Naive thymus-derived CD8-positive, alpha-beta T cell (primary cell): ENCODE measurements at regions of chr13 and their contacts with region 1.

Region 1: DNA sequence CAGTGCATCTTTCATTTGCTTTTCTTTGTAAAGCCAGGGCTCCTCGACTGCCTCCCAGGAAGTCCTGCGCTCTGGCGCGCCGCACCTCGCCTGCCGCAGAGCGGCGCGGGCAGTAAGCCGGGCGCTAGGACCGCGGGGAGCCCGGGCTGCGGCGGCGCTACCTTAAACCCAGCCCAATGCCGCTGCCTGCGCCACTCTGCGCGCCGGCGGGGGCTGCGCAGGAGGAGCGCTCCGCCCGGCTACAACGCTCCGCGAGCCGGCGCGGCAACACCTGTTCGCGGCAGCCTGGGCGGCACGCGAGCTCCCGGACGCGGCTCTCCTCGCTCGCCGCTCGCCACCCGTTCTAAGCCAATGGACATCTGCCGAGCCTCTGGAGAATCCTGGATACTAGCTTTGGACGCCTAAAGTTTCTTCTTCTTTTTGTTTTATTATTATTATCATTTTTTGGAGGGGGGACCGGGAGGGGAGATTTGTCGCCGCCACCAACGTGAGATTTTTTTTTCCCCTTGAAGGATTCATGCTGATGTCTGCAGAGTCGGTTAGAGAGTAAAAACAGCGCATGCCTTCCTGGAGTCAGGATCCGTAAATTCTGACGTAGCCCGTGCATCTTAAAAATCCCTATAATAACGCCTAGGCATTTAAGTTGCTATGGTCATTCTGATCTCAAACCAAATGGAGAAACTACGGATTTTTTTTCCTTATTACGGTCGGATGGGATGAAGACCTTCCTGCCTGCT is at the start of gene FGF9:
- DNase-seq: peak; percentile 71 to 89 (median 82)
- ATAC-seq: peak; percentile 66 to 70
- H3K4me3 Mint-ChIP-seq: peak within 1 kb of the TSS; percentile 89 to 97 (median 94)
- H3K27ac Mint-ChIP-seq: peak within 1 kb of the TSS; percentile 72 to 94 (median 88)
- H3K4me1 Mint-ChIP-seq: peaks cover 20 to 53% (median 47%) of the 10 kb centered on the region in 4 donors
- H3K27me3 Mint-ChIP-seq: peaks cover 0 to 32% (median 2%) of the 10 kb centered on the region in 5 donors
- polyA plus RNA-seq, gene FGF9: 1.3 to 3.5 (median 1.9) TPM

Region 2: GRCh38 chr13:21318891-21319532 is 352.0 kb before region 1 on chr13:
- POLR2A ChIA-PET with region 1: no interaction called
- DNase-seq: no peak
- ATAC-seq: peak in 1 of 2 donors; percentile 37
- H3K4me3 Mint-ChIP-seq: peak overlapping the region in 4 of 10 donors; percentile 42 to 57 (median 46)
- H3K27ac Mint-ChIP-seq: peak overlapping the region in 1 of 10 donors; percentile 53
- H3K4me1 Mint-ChIP-seq: peaks cover 0 to 1% (median 0%) of the 10 kb centered on the region in 4 donors
- H3K27me3 Mint-ChIP-seq: no peaks in the 10 kb centered on the region

Region 3: DNA sequence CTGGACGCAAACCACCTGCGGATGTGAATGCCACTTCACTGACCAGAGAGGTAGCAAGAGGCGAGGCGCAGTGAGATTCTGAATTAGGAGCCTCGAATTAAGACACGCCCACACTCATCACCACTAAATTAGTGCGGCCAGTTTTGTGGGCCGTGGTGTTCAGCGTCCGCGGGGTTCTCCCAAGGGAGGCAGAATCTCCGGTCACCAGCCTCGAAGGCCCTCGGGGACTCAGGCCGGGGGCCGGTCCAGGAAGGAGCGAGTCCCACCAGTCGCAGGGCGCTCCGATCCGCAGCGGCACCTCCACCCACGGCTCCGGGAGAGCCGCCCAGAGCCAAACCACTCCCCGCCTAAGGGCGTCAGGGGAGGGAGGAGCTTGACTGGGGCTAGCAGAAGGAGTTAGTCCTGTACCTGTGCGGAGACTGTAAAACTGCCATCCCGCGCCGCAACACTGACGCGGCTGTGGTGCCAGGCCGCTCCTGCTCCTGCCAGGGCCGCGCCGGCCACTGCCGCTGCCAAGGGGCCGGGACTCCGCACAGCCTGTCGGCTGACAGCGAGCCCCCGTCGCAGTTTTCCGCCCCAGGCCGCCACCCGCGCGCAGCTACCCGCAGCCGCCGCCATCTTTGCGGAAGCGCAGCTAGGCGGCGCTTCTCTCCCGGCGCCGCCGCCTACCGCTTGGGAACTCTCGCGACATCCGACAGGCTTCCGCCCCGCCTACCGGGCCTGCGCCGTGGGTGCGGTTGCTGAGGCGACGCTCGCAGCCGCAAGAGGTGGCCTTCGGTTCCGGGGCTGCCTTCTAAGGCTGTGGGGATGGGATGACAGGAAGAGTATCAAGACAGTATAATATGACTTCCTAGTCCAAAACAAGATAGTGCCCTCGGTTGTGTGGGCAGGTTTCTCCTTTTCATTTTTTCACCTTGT is 67.3 kb before region 1 on chr13 and contains the start of gene MICU2:
- POLR2A ChIA-PET with region 1: interaction called, 37 read pairs
- DNase-seq: peak; percentile 90 to 98 (median 96)
- ATAC-seq: peak; percentile 92 to 93
- H3K4me3 Mint-ChIP-seq: peak within 1 kb of the TSS; percentile 81 to 92 (median 91)
- H3K27ac Mint-ChIP-seq: peak within 1 kb of the TSS; percentile 92 to 98 (median 96)
- H3K4me1 Mint-ChIP-seq: peaks cover 23 to 52% (median 50%) of the 10 kb centered on the region in 4 donors
- H3K27me3 Mint-ChIP-seq: peaks cover 0 to 15% (median 4%) of the 10 kb centered on the region in 5 donors
- polyA plus RNA-seq, gene MICU2: 37.4 to 44.3 (median 38.7) TPM

Region 4: GRCh38 chr13:21638319-21639282 is 32.5 kb before region 1 on chr13:
- POLR2A ChIA-PET with region 1: interaction called, 10 read pairs
- DNase-seq: peak in 6 of 10 donors; percentile 8 to 53 (median 40)
- ATAC-seq: no peak
- H3K4me3 Mint-ChIP-seq: no peak overlapping the region
- H3K27ac Mint-ChIP-seq: no peak overlapping the region
- H3K4me1 Mint-ChIP-seq: peaks cover 0 to 6% (median 2%) of the 10 kb centered on the region in 4 donors
- H3K27me3 Mint-ChIP-seq: peaks cover 0 to 6% (median 2%) of the 10 kb centered on the region in 5 donors

Region 5: DNA sequence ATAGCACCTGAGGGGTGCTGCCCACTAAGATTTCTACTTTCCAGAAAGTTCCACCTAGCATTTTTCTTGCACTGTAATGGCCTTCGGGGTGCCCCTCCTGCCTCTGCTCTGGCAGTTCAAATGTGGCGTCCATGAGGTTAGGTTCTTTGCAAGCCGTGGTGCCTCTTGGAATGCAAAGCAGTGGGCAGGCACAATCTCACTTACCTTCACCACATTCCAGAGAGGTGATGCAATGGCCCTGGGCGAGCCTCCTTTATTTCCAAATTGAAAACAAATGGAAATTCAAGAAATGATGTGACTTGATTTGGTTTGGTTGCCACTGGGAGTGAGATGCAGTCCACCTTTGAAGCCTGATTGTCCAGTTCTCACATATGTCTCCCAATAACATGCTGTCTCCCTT is 46.8 kb after region 1 on chr13:
- POLR2A ChIA-PET with region 1: no interaction called
- DNase-seq: no peak
- ATAC-seq: no peak
- H3K4me3 Mint-ChIP-seq: no peak overlapping the region
- H3K27ac Mint-ChIP-seq: no peak overlapping the region
- H3K4me1 Mint-ChIP-seq: no peaks in the 10 kb centered on the region
- H3K27me3 Mint-ChIP-seq: peaks cover 20 to 70% (median 28%) of the 10 kb centered on the region in 5 donors

Region 6: GRCh38 chr13:22061351-22061805 is 390.3 kb after region 1 on chr13:
- POLR2A ChIA-PET with region 1: interaction called, 27 read pairs
- DNase-seq: peak; percentile 20 to 73 (median 48)
- ATAC-seq: peak; percentile 68 to 69
- H3K4me3 Mint-ChIP-seq: peak overlapping the region; percentile 44 to 83 (median 64)
- H3K27ac Mint-ChIP-seq: peak overlapping the region; percentile 94 to 100 (median 98)
- H3K4me1 Mint-ChIP-seq: peaks cover 41 to 80% (median 73%) of the 10 kb centered on the region in 4 donors
- H3K27me3 Mint-ChIP-seq: no peaks in the 10 kb centered on the region